Activated naive CD4-positive, alpha-beta T cell treated with anti-CD3 and anti-CD28 coated beads, Interleukin-2, amount 10 ng/mL, durations not matched to agents 7 days and 5 days (primary cell): ENCODE measurements at regions of chr11 and their contacts with region 1.

Region 1: GRCh38 chr11:34890812-34891211 is 25.4 kb downstream of the APIP start:
- DNase-seq: no peak
- H3K4me3 Mint-ChIP-seq: no peak overlapping the region
- H3K27ac Mint-ChIP-seq: no peak overlapping the region
- H3K4me1 Mint-ChIP-seq: no peaks in the 10 kb centered on the region
- H3K27me3 Mint-ChIP-seq: no peaks in the 10 kb centered on the region

Region 2: DNA sequence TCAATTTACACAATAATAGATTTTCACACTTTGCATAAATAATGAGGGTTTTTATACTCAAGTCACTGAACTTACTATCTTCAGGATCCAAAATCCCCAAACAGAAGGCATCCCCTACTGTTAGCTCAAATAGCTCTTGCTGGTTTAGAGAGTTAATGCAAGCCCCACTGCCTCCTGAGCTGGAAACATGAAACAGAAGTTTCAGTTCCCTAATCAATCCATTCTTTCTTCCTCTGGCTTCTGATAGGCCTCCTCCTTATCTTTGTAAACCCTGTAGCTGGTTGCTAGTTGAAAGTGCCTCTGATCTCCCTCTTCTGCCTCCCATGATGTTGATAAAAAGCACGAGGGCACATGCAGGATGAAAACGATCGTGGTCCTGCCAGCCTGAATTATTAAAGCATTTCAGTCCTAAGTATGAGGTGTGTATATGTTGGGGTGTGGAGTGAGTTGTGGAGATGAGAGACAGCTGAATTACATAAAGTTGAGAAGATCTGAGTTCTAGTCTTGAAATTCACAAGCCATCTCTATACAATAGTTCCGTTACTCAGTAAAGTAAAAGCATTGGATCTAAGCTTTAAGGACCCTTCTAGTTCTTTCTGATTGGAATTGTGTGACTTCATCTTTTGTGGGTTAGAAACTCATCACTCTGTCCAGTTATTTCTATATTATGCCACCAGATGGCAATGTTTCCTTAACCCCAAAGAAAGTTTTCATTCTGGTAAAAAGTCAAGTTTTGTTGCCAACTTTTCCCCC is 304.9 kb before region 1 on chr11:
- CTCF ChIA-PET with region 1: interaction called, 31 read pairs
- DNase-seq: no peak
- H3K4me3 Mint-ChIP-seq: no peak overlapping the region
- H3K27ac Mint-ChIP-seq: no peak overlapping the region
- H3K4me1 Mint-ChIP-seq: no peaks in the 10 kb centered on the region
- H3K27me3 Mint-ChIP-seq: peaks cover 16% of the 10 kb centered on the region

Region 3: DNA sequence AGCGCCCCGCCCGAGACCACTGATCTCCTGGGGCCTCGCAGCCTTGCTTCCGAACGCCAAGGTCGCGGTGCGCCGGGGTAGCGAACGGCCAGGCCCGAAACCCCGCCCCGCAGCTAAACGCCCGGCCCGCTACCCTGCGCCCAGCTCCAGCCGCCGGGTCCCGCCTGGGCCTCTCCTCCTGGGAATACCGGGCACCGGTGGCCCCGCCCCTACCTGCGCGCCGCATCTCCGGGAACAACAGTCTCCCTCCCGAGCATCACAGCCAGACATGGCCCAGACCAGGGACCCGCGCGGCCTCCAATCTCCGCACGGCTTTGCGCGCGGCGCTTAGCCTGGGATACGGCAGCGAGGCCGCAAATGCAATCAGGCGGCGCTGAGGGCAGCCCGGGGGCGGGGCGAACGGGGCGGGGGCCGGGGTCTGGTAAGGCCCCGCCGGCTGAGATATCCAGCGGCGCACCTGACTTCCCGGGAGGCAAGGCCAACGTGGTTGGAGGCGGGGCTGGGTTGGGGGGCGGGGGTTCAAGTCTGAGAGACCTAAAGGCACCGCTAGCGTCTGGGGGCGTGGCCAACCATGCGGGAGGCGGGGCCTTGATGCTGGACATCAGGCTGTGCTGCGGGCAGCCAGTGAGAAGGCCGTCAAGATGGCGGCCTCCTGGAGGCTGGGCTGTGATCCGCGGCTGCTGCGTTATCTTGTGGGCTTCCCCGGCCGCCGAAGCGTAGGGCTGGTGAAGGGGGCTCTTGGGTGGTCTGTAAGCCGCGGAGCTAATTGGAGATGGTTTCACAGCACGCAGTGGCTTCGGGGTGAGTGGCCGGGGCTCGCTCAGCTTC is 25.4 kb after region 1 on chr11 and contains the starts of genes APIP and PDHX:
- CTCF ChIA-PET with region 1: no interaction called
- DNase-seq: peak; percentile 96
- H3K4me3 Mint-ChIP-seq: peak within 1 kb of the TSS; percentile 88
- H3K27ac Mint-ChIP-seq: peak within 1 kb of the TSS; percentile 89
- H3K4me1 Mint-ChIP-seq: peaks cover 35% of the 10 kb centered on the region
- H3K27me3 Mint-ChIP-seq: no peaks in the 10 kb centered on the region